Common myeloid progenitor, CD34-positive (primary cell): ENCODE measurements at regions of chr5 and their contacts with region 1.

Region 1: DNA sequence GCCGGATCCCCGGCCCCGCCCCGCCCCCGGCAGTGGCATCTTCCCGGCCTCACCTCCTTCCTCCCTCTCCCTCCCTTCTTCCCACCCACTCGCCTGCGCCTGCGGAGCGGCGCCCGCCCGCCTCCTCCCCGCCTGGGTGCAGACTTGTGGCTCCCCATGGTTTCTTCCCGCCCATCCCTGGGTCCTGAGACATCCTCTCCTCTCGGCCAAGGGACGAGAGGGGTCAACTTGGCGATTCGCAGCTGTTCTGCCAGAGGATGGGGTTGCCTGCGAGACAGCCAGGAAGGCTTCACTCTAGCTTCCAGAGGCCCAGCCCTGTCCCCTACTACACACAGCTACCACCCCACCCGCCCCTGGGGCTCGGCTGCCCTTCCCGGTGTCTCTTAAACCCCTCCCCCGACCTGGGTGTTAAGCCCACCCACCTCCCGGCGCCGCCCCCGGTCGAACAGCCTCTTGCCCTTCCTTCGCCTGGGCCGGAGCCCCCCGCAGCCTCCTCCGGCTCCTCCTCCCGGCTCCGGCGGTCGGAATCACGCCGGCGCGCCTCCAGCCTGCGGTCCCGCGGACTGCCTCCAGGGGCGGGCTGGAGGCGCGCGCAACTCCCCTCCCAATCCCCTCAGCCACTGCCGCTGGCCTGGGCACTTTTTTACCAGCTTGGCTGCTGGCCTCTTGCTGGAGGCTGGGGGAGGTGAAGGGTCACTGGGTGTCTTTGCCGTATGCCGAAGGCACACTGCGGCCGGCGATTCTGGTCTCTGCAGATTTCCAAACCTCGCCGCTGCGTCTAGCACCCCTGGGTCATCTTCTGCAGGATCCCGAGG is 1.9 kb downstream of the JADE2 start:
- DNase-seq: peak; percentile 91 to 96 (median 95)
- H3K4me3 ChIP-seq: peak overlapping the region; percentile 68 to 98 (median 89)
- H3K27ac ChIP-seq: peak overlapping the region in 1 of 2 experiments; percentile 96
- H3K4me1 ChIP-seq: peaks cover 0 to 44% (median 38%) of the 10 kb centered on the region in 4 experiments
- H3K27me3 ChIP-seq: no peaks in the 10 kb centered on the region

Region 2: DNA sequence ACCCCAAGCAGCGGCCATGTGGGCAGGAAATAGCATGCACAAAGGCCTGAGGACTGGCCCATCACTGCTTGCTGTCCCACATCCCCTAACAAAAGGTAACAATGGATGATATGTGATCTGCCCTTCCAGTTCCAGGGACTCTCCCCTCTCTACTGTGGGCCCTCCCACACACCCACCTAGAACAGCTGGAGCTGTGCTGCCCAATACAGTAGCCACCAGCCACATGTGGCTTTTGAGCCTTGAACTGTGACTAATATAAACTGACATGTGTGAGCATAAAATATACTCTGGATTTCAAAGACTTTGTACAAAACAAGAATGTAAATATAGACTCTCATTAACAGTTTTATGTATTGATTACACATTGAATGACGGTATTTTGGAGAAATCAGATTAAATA is 637.0 kb before region 1 on chr5:
- CTCF ChIA-PET with region 1: no interaction called
- POLR2A ChIA-PET with region 1: no interaction called
- DNase-seq: no peak
- H3K4me3 ChIP-seq: no peak overlapping the region
- H3K27ac ChIP-seq: no peak overlapping the region
- H3K4me1 ChIP-seq: no peaks in the 10 kb centered on the region
- H3K27me3 ChIP-seq: peaks cover 0 to 4% (median 0%) of the 10 kb centered on the region in 5 experiments

Region 3: GRCh38 chr5:134436523-134437339 is 90.6 kb before region 1 on chr5:
- CTCF ChIA-PET with region 1: interaction called, 11 read pairs
- POLR2A ChIA-PET with region 1: interaction called, 6 read pairs
- DNase-seq: peak; percentile 89 to 97 (median 96)
- H3K4me3 ChIP-seq: peak overlapping the region in 3 of 7 experiments; percentile 27 to 65 (median 33)
- H3K27ac ChIP-seq: peak overlapping the region; percentile 81
- H3K4me1 ChIP-seq: peaks cover 4 to 26% (median 19%) of the 10 kb centered on the region in 4 experiments
- H3K27me3 ChIP-seq: no peaks in the 10 kb centered on the region

Region 4: DNA sequence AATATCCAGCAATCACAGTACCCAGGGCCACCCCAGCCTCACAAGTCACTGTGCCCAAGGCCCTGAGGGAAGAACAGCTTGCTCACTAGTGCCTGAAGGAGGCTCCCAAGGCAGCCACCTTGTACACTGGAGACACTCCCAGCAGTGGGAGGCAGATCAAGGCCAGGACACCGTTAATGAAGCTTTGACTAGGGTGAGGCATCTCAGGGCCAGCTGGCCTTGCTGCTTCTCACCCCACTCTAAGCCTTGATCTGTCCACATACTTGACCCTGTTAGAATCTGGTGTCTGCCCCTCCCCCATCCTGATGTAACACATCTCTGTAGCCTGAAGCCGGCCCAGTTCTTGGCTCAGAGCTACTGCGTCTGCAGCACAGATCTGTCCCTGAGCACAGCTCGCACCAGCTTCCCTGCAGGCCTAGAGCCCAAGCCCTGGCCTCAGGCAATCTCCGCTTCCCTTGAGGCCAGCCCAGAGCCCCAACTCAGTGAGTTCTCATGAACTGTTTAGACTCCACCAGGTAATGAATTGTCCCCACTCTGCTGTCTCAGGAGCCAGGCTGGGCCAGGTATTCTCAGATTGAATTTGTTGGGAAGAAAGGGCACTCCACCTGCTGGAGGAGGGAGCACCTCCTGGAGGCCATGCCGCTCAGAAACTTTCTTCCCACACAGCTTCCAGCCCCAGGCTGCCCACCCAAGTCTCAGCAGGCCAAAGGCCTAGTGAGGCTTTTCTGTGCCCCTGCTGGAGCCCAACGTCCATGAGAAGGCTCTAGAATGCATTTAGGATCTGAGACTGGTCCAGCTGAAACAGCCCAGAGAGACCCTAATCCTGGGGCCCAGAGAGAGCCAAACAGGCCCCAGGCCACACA is 15.3 kb before region 1 on chr5:
- CTCF ChIA-PET with region 1: interaction called, 17 read pairs
- POLR2A ChIA-PET with region 1: interaction called, 6 read pairs
- DNase-seq: no peak
- H3K4me3 ChIP-seq: no peak overlapping the region
- H3K27ac ChIP-seq: no peak overlapping the region
- H3K4me1 ChIP-seq: peaks cover 0 to 35% (median 10%) of the 10 kb centered on the region in 4 experiments
- H3K27me3 ChIP-seq: no peaks in the 10 kb centered on the region

Region 5: GRCh38 chr5:134555890-134556311 is 28.5 kb after region 1 on chr5:
- CTCF ChIA-PET with region 1: interaction called, 18 read pairs
- POLR2A ChIA-PET with region 1: interaction called, 4 read pairs
- DNase-seq: peak; percentile 98 to 100 (median 99)
- H3K4me3 ChIP-seq: no peak overlapping the region
- H3K27ac ChIP-seq: peak overlapping the region; percentile 71 to 78
- H3K4me1 ChIP-seq: peaks cover 0 to 35% (median 28%) of the 10 kb centered on the region in 4 experiments
- H3K27me3 ChIP-seq: no peaks in the 10 kb centered on the region

Region 6: GRCh38 chr5:135127505-135128239 is 600.3 kb after region 1 on chr5:
- CTCF ChIA-PET with region 1: no interaction called
- POLR2A ChIA-PET with region 1: no interaction called
- DNase-seq: no peak
- H3K4me3 ChIP-seq: no peak overlapping the region
- H3K27ac ChIP-seq: no peak overlapping the region
- H3K4me1 ChIP-seq: no peaks in the 10 kb centered on the region
- H3K27me3 ChIP-seq: peaks cover 0 to 13% (median 0%) of the 10 kb centered on the region in 5 experiments

Region 7: DNA sequence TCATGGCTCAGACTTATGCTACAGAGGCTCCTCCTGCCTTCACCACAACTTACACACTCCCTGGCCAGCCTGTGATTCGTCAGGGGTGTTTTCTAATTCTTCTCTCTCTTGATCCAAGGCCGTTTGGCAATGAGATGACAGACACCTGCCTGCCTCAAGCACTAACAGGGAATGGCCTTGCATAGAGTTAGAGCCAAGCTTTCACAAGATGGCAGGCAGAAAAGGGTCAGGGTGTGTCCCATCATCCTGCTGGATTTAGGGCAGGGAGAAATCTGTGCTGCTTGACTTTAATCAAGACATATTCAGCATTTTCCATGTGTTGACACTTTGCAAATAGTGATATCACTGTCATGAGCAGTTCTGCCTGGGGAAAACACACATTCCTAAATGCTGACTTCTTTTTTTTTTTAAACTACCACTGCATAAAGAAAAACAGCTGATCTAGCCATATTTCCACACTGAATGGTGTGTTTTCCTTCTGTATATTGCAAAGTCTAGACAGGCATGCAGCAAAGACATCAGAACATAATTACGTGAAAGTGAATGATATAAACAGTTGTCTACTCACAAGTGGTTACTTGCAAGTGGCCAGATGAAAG is 1212.1 kb after region 1 on chr5:
- CTCF ChIA-PET with region 1: no interaction called
- POLR2A ChIA-PET with region 1: no interaction called
- DNase-seq: no peak
- H3K4me3 ChIP-seq: no peak overlapping the region
- H3K27ac ChIP-seq: no peak overlapping the region
- H3K4me1 ChIP-seq: no peaks in the 10 kb centered on the region
- H3K27me3 ChIP-seq: peaks cover 0 to 3% (median 0%) of the 10 kb centered on the region in 5 experiments